Heart left ventricle (tissue), 16 donors: ENCODE measurements at regions of chr12 and their contacts with region 1.

Region 1: GRCh38 chr12:19915392-19916195 is 452.7 kb upstream of the PDE3A start:
- DNase-seq: no peak
- ATAC-seq: peak; percentile 45 to 84 (median 69)
- H3K4me3 ChIP-seq: no peak overlapping the region
- H3K27ac ChIP-seq: peak overlapping the region in 9 of 12 donors; percentile 10 to 59 (median 45)
- H3K4me1 ChIP-seq: peaks cover 0 to 26% (median 3%) of the 10 kb centered on the region in 12 donors
- H3K27me3 ChIP-seq: no peaks in the 10 kb centered on the region
- CTCF ChIP-seq: peak; percentile 41 to 76 (median 64)
- POLR2A ChIP-seq: no peak

Region 2: GRCh38 chr12:19847294-19848059 is 68.1 kb before region 1 on chr12:
- intact Hi-C with region 1: loop called in 1 of 10 experiments (anchors 2 kb)
- DNase-seq: peak in 4 of 5 donors; percentile 38 to 57 (median 44)
- ATAC-seq: peak; percentile 87 to 89 (median 89)
- H3K4me3 ChIP-seq: peak overlapping the region in 7 of 12 donors; percentile 1 to 27 (median 12)
- H3K27ac ChIP-seq: peak overlapping the region; percentile 76 to 96 (median 86)
- H3K4me1 ChIP-seq: peaks cover 0 to 22% (median 13%) of the 10 kb centered on the region in 12 donors
- H3K27me3 ChIP-seq: no peaks in the 10 kb centered on the region
- CTCF ChIP-seq: no peak
- POLR2A ChIP-seq: no peak

Region 3: GRCh38 chr12:20212658-20213555 is 297.3 kb after region 1 on chr12:
- intact Hi-C with region 1: loop called in 3 of 10 experiments (anchors 5 to 10 kb)
- DNase-seq: peak; percentile 83 to 91 (median 86)
- ATAC-seq: peak; percentile 97 to 99 (median 99)
- H3K4me3 ChIP-seq: peak overlapping the region in 8 of 12 donors; percentile 25 to 37 (median 28)
- H3K27ac ChIP-seq: peak overlapping the region; percentile 53 to 87 (median 83)
- H3K4me1 ChIP-seq: peaks cover 0 to 60% (median 25%) of the 10 kb centered on the region in 12 donors
- H3K27me3 ChIP-seq: no peaks in the 10 kb centered on the region
- CTCF ChIP-seq: peak in 1 of 12 donors; percentile 4
- POLR2A ChIP-seq: no peak

Region 4: GRCh38 chr12:20272801-20273200 is 357.2 kb after region 1 on chr12:
- intact Hi-C with region 1: loop called in 1 of 10 experiments (anchors 10 kb)
- DNase-seq: no peak
- ATAC-seq: peak; percentile 76 to 83 (median 80)
- H3K4me3 ChIP-seq: peak overlapping the region in 1 of 12 donors; percentile 30
- H3K27ac ChIP-seq: peak overlapping the region; percentile 28 to 91 (median 71)
- H3K4me1 ChIP-seq: peaks cover 0 to 53% (median 16%) of the 10 kb centered on the region in 12 donors
- H3K27me3 ChIP-seq: no peaks in the 10 kb centered on the region
- CTCF ChIP-seq: no peak
- POLR2A ChIP-seq: no peak

Region 5: DNA sequence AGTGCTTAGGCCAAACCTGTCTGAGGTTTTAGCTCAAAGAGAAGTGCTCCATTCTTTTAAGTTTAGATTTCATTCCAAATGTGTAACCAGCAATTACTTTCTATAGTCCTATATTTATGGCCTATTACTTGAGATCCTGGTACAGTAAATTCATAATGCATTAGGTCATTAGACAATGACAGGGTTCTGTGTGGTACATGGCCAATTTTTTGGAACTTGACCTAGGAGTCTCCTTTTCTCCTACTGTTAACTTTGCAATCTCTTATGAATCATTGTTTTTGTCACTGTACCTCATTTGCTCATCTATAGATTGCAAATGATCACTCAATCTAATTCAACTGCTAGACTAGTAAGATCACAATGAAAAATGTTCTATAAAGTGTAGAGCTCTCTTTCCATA is 589.5 kb after region 1 on chr12:
- intact Hi-C with region 1: no loop called
- DNase-seq: no peak
- ATAC-seq: peak in 2 of 4 donors; percentile 7 to 18
- H3K4me3 ChIP-seq: no peak overlapping the region
- H3K27ac ChIP-seq: peak overlapping the region in 2 of 12 donors; percentile 9 to 33
- H3K4me1 ChIP-seq: peaks cover 0 to 55% (median 24%) of the 10 kb centered on the region in 12 donors
- H3K27me3 ChIP-seq: no peaks in the 10 kb centered on the region
- CTCF ChIP-seq: no peak
- POLR2A ChIP-seq: no peak

Region 6: GRCh38 chr12:20596061-20596460 is 680.5 kb after region 1 on chr12:
- intact Hi-C with region 1: loop called in 3 of 10 experiments (anchors 10 kb)
- DNase-seq: no peak
- ATAC-seq: no peak
- H3K4me3 ChIP-seq: no peak overlapping the region
- H3K27ac ChIP-seq: no peak overlapping the region
- H3K4me1 ChIP-seq: peaks cover 0 to 43% (median 11%) of the 10 kb centered on the region in 12 donors
- H3K27me3 ChIP-seq: no peaks in the 10 kb centered on the region
- CTCF ChIP-seq: no peak
- POLR2A ChIP-seq: no peak

Region 7: DNA sequence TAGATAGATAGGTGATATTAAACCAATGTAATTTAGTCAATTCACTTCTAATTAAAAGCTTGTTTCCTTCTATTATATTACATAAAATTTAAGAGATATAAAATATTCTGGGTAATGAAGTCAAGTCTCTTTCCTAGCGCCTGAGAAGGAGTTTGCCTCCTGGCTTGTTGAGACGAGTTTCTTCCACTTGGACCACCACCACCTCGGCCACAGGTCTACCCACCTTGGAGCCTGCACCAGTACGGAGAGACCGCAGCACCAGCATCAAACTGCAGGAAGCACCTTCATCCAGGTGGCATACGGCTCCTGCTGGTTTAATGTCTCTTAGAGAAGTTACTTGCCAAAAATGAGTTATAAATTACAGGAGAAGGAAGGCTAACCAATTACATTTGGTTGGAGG is 700.5 kb after region 1 on chr12:
- intact Hi-C with region 1: loop called in 2 of 10 experiments (anchors 10 kb)
- DNase-seq: no peak
- ATAC-seq: no peak
- H3K4me3 ChIP-seq: no peak overlapping the region
- H3K27ac ChIP-seq: no peak overlapping the region
- H3K4me1 ChIP-seq: peaks cover 0 to 17% (median 0%) of the 10 kb centered on the region in 12 donors
- H3K27me3 ChIP-seq: no peaks in the 10 kb centered on the region
- CTCF ChIP-seq: no peak
- POLR2A ChIP-seq: no peak